ENCODE measurements at regions of chr17 and their contacts with region 1.

Region 1: GRCh38 chr17:58517734-58518609 is 3.5 kb upstream of the MTMR4 start:
- DNase-seq: peak; percentile 98 to 100 (median 99)
- ATAC-seq: peak; percentile 80
- H3K4me3 ChIP-seq: peak overlapping the region; percentile 77 to 94
- H3K4me3 Mint-ChIP-seq: peak overlapping the region; percentile 98
- H3K27ac ChIP-seq: peak overlapping the region; percentile 74 to 82
- H3K27ac Mint-ChIP-seq: peak overlapping the region; percentile 95
- H3K4me1 ChIP-seq: peaks cover 38% of the 10 kb centered on the region
- H3K4me1 Mint-ChIP-seq: peaks cover 42% of the 10 kb centered on the region
- H3K27me3 ChIP-seq: no peaks in the 10 kb centered on the region
- H3K27me3 Mint-ChIP-seq: no peaks in the 10 kb centered on the region
- CTCF ChIP-seq: no peak

Region 2: GRCh38 chr17:56833809-56834379 is 1684.1 kb before region 1 on chr17 and contains the starts of genes C17orf67 and DGKE:
- CTCF ChIA-PET with region 1: no interaction called
- POLR2A ChIA-PET with region 1: no interaction called
- intact Hi-C with region 1: loop called in 1 of 2 experiments (anchors 5 kb)
- DNase-seq: peak; percentile 96 to 99 (median 99)
- ATAC-seq: peak; percentile 88
- H3K4me3 ChIP-seq: peak within 1 kb of the TSS; percentile 78 to 97
- H3K4me3 Mint-ChIP-seq: peak within 1 kb of the TSS; percentile 96
- H3K27ac ChIP-seq: peak within 1 kb of the TSS; percentile 76 to 79
- H3K27ac Mint-ChIP-seq: peak within 1 kb of the TSS; percentile 93
- H3K4me1 ChIP-seq: peaks cover 55% of the 10 kb centered on the region
- H3K4me1 Mint-ChIP-seq: peaks cover 67% of the 10 kb centered on the region
- H3K27me3 ChIP-seq: no peaks in the 10 kb centered on the region
- H3K27me3 Mint-ChIP-seq: no peaks in the 10 kb centered on the region
- CTCF ChIP-seq: no peak
- total RNA-seq, gene C17orf67: 2.4 to 2.9 TPM
- total RNA-seq, gene DGKE: 24.4 to 25.4 TPM

Region 3: GRCh38 chr17:58219001-58219788 is 298.8 kb before region 1 on chr17 and contains the start of gene MKS1:
- CTCF ChIA-PET with region 1: no interaction called
- POLR2A ChIA-PET with region 1: no interaction called
- intact Hi-C with region 1: loop called (anchors 1 to 5 kb)
- DNase-seq: peak; percentile 92 to 97 (median 95)
- ATAC-seq: peak; percentile 97
- H3K4me3 ChIP-seq: peak within 1 kb of the TSS; percentile 63 to 91
- H3K4me3 Mint-ChIP-seq: peak within 1 kb of the TSS; percentile 87
- H3K27ac ChIP-seq: peak within 1 kb of the TSS; percentile 82 to 90
- H3K27ac Mint-ChIP-seq: peak within 1 kb of the TSS; percentile 93
- H3K4me1 ChIP-seq: peaks cover 14% of the 10 kb centered on the region
- H3K4me1 Mint-ChIP-seq: peaks cover 23% of the 10 kb centered on the region
- H3K27me3 ChIP-seq: no peaks in the 10 kb centered on the region
- H3K27me3 Mint-ChIP-seq: peaks cover 2% of the 10 kb centered on the region
- CTCF ChIP-seq: peak; percentile 67
- total RNA-seq, gene MKS1: 4.6 to 4.9 TPM

Region 4: GRCh38 chr17:58270476-58271215 is 247.3 kb before region 1 on chr17:
- CTCF ChIA-PET with region 1: no interaction called
- POLR2A ChIA-PET with region 1: no interaction called
- intact Hi-C with region 1: no loop called
- DNase-seq: no peak
- ATAC-seq: peak; percentile 36
- H3K4me3 ChIP-seq: no peak overlapping the region
- H3K4me3 Mint-ChIP-seq: no peak overlapping the region
- H3K27ac ChIP-seq: no peak overlapping the region
- H3K27ac Mint-ChIP-seq: no peak overlapping the region
- H3K4me1 ChIP-seq: no peaks in the 10 kb centered on the region
- H3K4me1 Mint-ChIP-seq: no peaks in the 10 kb centered on the region
- H3K27me3 ChIP-seq: no peaks in the 10 kb centered on the region
- H3K27me3 Mint-ChIP-seq: peaks cover 11% of the 10 kb centered on the region
- CTCF ChIP-seq: no peak

Region 5: GRCh38 chr17:58447039-58447975 is 70.7 kb before region 1 on chr17:
- CTCF ChIA-PET with region 1: no interaction called
- POLR2A ChIA-PET with region 1: no interaction called
- intact Hi-C with region 1: no loop called
- DNase-seq: peak; percentile 20 to 79 (median 58)
- ATAC-seq: no peak
- H3K4me3 ChIP-seq: no peak overlapping the region
- H3K4me3 Mint-ChIP-seq: no peak overlapping the region
- H3K27ac ChIP-seq: no peak overlapping the region
- H3K27ac Mint-ChIP-seq: no peak overlapping the region
- H3K4me1 ChIP-seq: no peaks in the 10 kb centered on the region
- H3K4me1 Mint-ChIP-seq: peaks cover 3% of the 10 kb centered on the region
- H3K27me3 ChIP-seq: no peaks in the 10 kb centered on the region
- H3K27me3 Mint-ChIP-seq: no peaks in the 10 kb centered on the region
- CTCF ChIP-seq: peak; percentile 60

Region 6: GRCh38 chr17:58487589-58488427 is 30.2 kb before region 1 on chr17 and contains the start of gene HSF5:
- CTCF ChIA-PET with region 1: interaction called, 5 read pairs
- POLR2A ChIA-PET with region 1: interaction called, 4 read pairs
- intact Hi-C with region 1: loop called in 1 of 2 experiments (anchors 1 kb)
- DNase-seq: peak; percentile 52 to 89 (median 76)
- ATAC-seq: peak; percentile 94
- H3K4me3 ChIP-seq: peak within 1 kb of the TSS; percentile 29 to 37
- H3K4me3 Mint-ChIP-seq: peak within 1 kb of the TSS; percentile 69
- H3K27ac ChIP-seq: peak within 1 kb of the TSS; percentile 22 to 40
- H3K27ac Mint-ChIP-seq: peak within 1 kb of the TSS; percentile 70
- H3K4me1 ChIP-seq: peaks cover 14% of the 10 kb centered on the region
- H3K4me1 Mint-ChIP-seq: peaks cover 16% of the 10 kb centered on the region
- H3K27me3 ChIP-seq: no peaks in the 10 kb centered on the region
- H3K27me3 Mint-ChIP-seq: no peaks in the 10 kb centered on the region
- CTCF ChIP-seq: peak; percentile 68
- total RNA-seq, gene HSF5: 1.1 to 1.6 TPM

Region 7: DNA sequence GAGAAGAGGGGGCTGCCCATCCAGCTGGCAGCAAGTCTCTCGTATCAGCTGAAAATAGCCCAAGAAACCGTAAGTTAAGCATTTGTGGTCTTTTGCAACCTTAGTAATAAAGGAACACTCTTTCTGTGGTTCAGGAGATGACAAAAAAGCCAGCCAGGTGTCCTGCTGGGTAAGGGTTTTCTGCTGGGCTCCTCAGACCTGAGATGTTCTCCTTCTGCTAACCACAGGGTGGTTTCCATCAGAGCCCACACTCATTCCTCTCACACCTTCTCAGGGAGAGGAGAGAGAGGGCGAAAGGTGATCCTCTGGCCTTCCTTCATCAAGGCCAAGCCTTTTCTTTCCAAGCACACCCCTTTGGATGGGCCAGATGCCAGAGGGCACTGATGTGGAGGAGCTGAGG is 103.2 kb after region 1 on chr17:
- CTCF ChIA-PET with region 1: no interaction called
- POLR2A ChIA-PET with region 1: no interaction called
- intact Hi-C with region 1: no loop called
- DNase-seq: no peak
- ATAC-seq: no peak
- H3K4me3 ChIP-seq: no peak overlapping the region
- H3K4me3 Mint-ChIP-seq: no peak overlapping the region
- H3K27ac ChIP-seq: no peak overlapping the region
- H3K27ac Mint-ChIP-seq: no peak overlapping the region
- H3K4me1 ChIP-seq: no peaks in the 10 kb centered on the region
- H3K4me1 Mint-ChIP-seq: no peaks in the 10 kb centered on the region
- H3K27me3 ChIP-seq: no peaks in the 10 kb centered on the region
- H3K27me3 Mint-ChIP-seq: no peaks in the 10 kb centered on the region
- CTCF ChIP-seq: no peak

Region 8: DNA sequence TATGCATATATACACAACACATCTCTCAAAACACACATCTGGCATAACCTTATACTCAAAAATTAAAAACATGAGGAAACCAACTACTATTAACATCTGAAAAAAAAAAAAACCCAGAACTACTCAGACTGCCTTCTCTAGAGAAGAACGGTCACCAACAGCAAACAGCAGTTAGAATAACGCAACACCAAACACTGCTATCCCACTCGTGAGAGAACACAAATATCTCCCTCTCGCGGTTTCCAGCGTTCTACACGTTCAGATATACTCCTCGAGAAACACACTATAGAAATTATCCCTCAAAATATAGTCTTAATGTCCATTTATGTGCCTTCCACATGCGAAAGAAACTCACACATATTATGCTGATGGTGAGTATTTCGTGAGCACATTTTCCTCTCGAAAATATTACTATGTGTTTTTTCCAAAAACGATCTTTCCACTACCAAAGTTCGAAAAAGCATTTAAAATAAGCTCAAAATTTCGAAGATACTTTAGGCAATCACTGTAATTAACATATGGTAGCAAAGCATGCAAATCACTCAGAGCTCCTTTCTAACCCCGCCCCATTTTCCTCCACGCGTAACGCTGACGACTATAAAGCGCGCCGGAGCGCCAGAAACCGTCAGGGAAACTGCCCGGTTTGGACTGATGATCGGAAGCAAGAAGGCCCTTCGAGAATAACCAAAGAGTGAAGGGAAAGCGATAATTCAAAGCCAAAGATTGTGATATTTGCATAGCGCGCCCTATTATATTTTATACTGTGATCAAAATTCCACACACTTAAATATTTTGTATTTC is 113.8 kb after region 1 on chr17:
- CTCF ChIA-PET with region 1: interaction called, 5 read pairs
- POLR2A ChIA-PET with region 1: interaction called, 11 read pairs
- intact Hi-C with region 1: loop called (anchors 1 kb)
- DNase-seq: peak; percentile 84 to 97 (median 91)
- ATAC-seq: peak; percentile 88
- H3K4me3 ChIP-seq: peak overlapping the region; percentile 48 to 50
- H3K4me3 Mint-ChIP-seq: no peak overlapping the region
- H3K27ac ChIP-seq: peak overlapping the region; percentile 95 to 97
- H3K27ac Mint-ChIP-seq: no peak overlapping the region
- H3K4me1 ChIP-seq: peaks cover 13% of the 10 kb centered on the region
- H3K4me1 Mint-ChIP-seq: peaks cover 2% of the 10 kb centered on the region
- H3K27me3 ChIP-seq: no peaks in the 10 kb centered on the region
- H3K27me3 Mint-ChIP-seq: no peaks in the 10 kb centered on the region
- CTCF ChIP-seq: no peak

Region 9: DNA sequence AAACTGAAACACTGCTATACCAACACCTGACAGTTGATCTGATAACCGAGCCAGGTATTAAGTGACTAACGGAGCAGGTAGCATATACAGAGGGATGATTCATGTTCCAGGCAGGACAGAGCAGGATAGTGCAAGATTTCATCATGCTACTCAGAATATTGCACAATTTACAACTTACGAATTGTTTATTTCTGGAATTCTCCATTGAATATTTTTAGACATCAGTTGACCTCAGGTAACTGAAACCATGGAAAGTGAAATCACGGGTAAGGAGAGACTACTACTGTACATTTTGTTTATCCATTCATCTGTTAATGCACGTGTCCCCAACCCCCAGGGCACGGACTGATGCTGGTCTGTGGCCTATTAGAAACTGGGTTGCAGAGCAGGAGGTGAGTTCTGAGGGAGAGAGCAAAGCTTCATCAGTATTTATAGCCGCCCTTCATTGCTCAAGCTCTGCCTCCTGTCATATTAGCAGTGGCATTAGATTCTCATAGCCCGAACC is 223.2 kb after region 1 on chr17:
- CTCF ChIA-PET with region 1: no interaction called
- POLR2A ChIA-PET with region 1: no interaction called
- intact Hi-C with region 1: no loop called
- DNase-seq: no peak
- ATAC-seq: no peak
- H3K4me3 ChIP-seq: no peak overlapping the region
- H3K4me3 Mint-ChIP-seq: no peak overlapping the region
- H3K27ac ChIP-seq: no peak overlapping the region
- H3K27ac Mint-ChIP-seq: no peak overlapping the region
- H3K4me1 ChIP-seq: no peaks in the 10 kb centered on the region
- H3K4me1 Mint-ChIP-seq: no peaks in the 10 kb centered on the region
- H3K27me3 ChIP-seq: no peaks in the 10 kb centered on the region
- H3K27me3 Mint-ChIP-seq: no peaks in the 10 kb centered on the region
- CTCF ChIP-seq: no peak

Region 10: GRCh38 chr17:59004338-59005111 is 486.6 kb after region 1 on chr17:
- CTCF ChIA-PET with region 1: interaction called, 29 read pairs
- POLR2A ChIA-PET with region 1: interaction called, 9 read pairs
- intact Hi-C with region 1: loop called (anchors 1 kb)
- DNase-seq: peak; percentile 52 to 82 (median 74)
- ATAC-seq: peak; percentile 54
- H3K4me3 ChIP-seq: no peak overlapping the region
- H3K4me3 Mint-ChIP-seq: no peak overlapping the region
- H3K27ac ChIP-seq: peak overlapping the region in 1 of 2 experiments; percentile 40
- H3K27ac Mint-ChIP-seq: peak overlapping the region; percentile 60
- H3K4me1 ChIP-seq: peaks cover 15% of the 10 kb centered on the region
- H3K4me1 Mint-ChIP-seq: peaks cover 13% of the 10 kb centered on the region
- H3K27me3 ChIP-seq: no peaks in the 10 kb centered on the region
- H3K27me3 Mint-ChIP-seq: no peaks in the 10 kb centered on the region
- CTCF ChIP-seq: peak; percentile 98

Region 11: GRCh38 chr17:59440784-59441441 is 922.9 kb after region 1 on chr17:
- CTCF ChIA-PET with region 1: no interaction called
- POLR2A ChIA-PET with region 1: no interaction called
- intact Hi-C with region 1: loop called in 1 of 2 experiments (anchors 2 kb)
- DNase-seq: peak; percentile 66 to 91 (median 88)
- ATAC-seq: peak; percentile 97
- H3K4me3 ChIP-seq: no peak overlapping the region
- H3K4me3 Mint-ChIP-seq: no peak overlapping the region
- H3K27ac ChIP-seq: no peak overlapping the region
- H3K27ac Mint-ChIP-seq: no peak overlapping the region
- H3K4me1 ChIP-seq: peaks cover 19% of the 10 kb centered on the region
- H3K4me1 Mint-ChIP-seq: peaks cover 17% of the 10 kb centered on the region
- H3K27me3 ChIP-seq: no peaks in the 10 kb centered on the region
- H3K27me3 Mint-ChIP-seq: no peaks in the 10 kb centered on the region
- CTCF ChIP-seq: peak; percentile 76